Mammary epithelial cell (primary cell): ENCODE measurements at regions of chr3 and their contacts with region 1.

Region 1: GRCh38 chr3:50003216-50003615 is 63.3 kb downstream of the RBM6 start:
- DNase-seq: no peak
- H3K4me3 ChIP-seq: no peak overlapping the region
- H3K27ac ChIP-seq: no peak overlapping the region
- H3K4me1 ChIP-seq: no peaks in the 10 kb centered on the region
- H3K27me3 ChIP-seq: no peaks in the 10 kb centered on the region
- CTCF ChIP-seq: no peak

Region 2: DNA sequence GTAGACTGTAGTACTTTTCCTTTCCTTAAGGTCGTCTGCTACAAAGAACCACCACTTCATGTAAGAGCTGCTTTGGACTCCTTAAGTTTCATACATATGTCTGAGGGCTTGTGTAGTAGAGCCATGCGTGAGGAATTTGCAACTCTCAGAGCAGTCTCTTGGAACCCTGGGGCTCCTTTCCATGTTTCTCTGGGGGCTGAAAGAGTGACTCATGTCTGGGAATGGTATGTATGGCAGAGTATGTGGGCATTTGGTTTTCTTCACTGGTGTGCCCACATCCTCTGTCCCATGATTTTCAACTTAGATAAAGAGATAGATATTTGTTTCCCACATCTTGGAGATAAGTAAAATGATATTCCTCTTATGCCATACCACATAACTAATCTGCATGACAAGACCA is 64.9 kb after region 1 on chr3:
- CTCF ChIA-PET with region 1: no interaction called
- dilution Hi-C with region 1: loop called (anchors 5 kb)
- in situ Hi-C with region 1: no loop called
- intact Hi-C with region 1: no loop called
- DNase-seq: peak; percentile 35
- H3K4me3 ChIP-seq: no peak overlapping the region
- H3K27ac ChIP-seq: no peak overlapping the region
- H3K4me1 ChIP-seq: peaks cover 10% of the 10 kb centered on the region
- H3K27me3 ChIP-seq: no peaks in the 10 kb centered on the region
- CTCF ChIP-seq: no peak